ENCODE measurements at regions of chr10 and their contacts with region 1.

Region 1: GRCh38 chr10:92432596-92432995 is 141.3 kb downstream of the IDE start:
- DNase-seq: no peak
- H3K4me3 ChIP-seq: no peak overlapping the region
- H3K27ac ChIP-seq: no peak overlapping the region
- H3K4me1 ChIP-seq: no peaks in the 10 kb centered on the region
- H3K27me3 ChIP-seq: no peaks in the 10 kb centered on the region
- CTCF ChIP-seq: no peak
- EP300 ChIP-seq: no peak
- POLR2A ChIP-seq: no peak

Region 2: GRCh38 chr10:92082583-92083280 is 349.9 kb before region 1 on chr10:
- in situ Hi-C with region 1: loop called (anchors 5 to 10 kb)
- intact Hi-C with region 1: loop called (anchors 5 kb)
- DNase-seq: no peak
- H3K4me3 ChIP-seq: no peak overlapping the region
- H3K27ac ChIP-seq: no peak overlapping the region
- H3K4me1 ChIP-seq: peaks cover 0 to 7% (median 0%) of the 10 kb centered on the region in 4 donors
- H3K27me3 ChIP-seq: no peaks in the 10 kb centered on the region
- CTCF ChIP-seq: no peak
- EP300 ChIP-seq: no peak
- POLR2A ChIP-seq: no peak

Region 3: GRCh38 chr10:92087750-92088395 is 344.7 kb before region 1 on chr10:
- in situ Hi-C with region 1: loop called (anchors 5 to 10 kb)
- intact Hi-C with region 1: loop called (anchors 5 kb)
- DNase-seq: peak; percentile 69
- H3K4me3 ChIP-seq: no peak overlapping the region
- H3K27ac ChIP-seq: no peak overlapping the region
- H3K4me1 ChIP-seq: peaks cover 0 to 3% (median 0%) of the 10 kb centered on the region in 4 donors
- H3K27me3 ChIP-seq: no peaks in the 10 kb centered on the region
- CTCF ChIP-seq: peak; percentile 68 to 93 (median 69)
- EP300 ChIP-seq: no peak
- POLR2A ChIP-seq: no peak

Region 4: DNA sequence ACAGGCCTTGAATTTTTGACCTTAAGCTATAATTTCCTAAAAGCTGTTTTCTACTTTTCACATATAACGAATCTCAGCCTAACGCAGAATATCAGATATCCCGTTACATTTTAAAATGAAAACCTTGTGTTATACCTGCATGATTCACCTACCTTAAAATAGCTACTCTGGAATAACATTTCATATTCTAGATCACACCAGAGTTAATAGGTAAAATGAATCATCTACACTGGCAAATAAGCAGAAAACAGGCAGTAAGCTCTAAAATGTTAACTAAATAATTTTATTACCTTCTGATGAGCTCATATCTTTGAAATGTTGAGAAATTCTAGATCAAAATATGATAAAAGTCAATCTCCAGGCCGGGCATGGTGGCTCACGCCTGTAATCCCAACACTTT is 213.1 kb before region 1 on chr10:
- in situ Hi-C with region 1: no loop called
- intact Hi-C with region 1: loop called (anchors 5 kb)
- DNase-seq: no peak
- H3K4me3 ChIP-seq: no peak overlapping the region
- H3K27ac ChIP-seq: no peak overlapping the region
- H3K4me1 ChIP-seq: no peaks in the 10 kb centered on the region
- H3K27me3 ChIP-seq: no peaks in the 10 kb centered on the region
- CTCF ChIP-seq: no peak
- EP300 ChIP-seq: no peak
- POLR2A ChIP-seq: no peak

Region 5: DNA sequence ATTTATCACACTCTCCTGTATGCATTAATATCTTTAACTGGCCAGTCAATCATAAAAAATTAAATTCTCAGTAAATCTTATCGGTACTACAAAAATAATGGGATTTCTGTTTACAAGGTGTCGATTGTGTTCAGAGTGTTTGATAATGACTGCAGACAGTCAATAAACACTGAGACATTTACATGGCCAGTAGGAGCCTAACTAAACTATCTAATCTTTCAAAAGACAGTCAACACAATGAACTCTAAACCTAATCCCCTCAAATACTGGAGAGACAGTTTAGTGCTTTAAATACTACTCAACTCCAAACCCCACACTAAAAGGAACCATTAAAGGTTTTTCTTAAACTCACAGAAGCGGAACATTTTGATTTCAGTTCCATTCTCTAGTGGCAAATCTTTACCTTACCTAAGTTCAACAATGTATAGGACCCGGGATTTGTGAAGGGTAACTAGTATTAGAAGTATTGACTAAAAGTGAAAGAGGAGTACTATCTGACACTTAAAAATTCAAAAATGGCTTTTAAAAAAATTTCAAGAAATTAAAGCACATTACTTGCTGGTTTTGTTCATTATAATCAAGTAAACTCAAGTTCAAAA is 378.4 kb after region 1 on chr10:
- in situ Hi-C with region 1: no loop called
- intact Hi-C with region 1: no loop called
- DNase-seq: no peak
- H3K4me3 ChIP-seq: no peak overlapping the region
- H3K27ac ChIP-seq: no peak overlapping the region
- H3K4me1 ChIP-seq: no peaks in the 10 kb centered on the region
- H3K27me3 ChIP-seq: no peaks in the 10 kb centered on the region
- CTCF ChIP-seq: no peak
- EP300 ChIP-seq: no peak
- POLR2A ChIP-seq: no peak